ENCODE measurements at regions of chr4 and their contacts with region 1.

Region 1: GRCh38 chr4:142434519-142435239 is 411.4 kb downstream of the INPP4B start:
- DNase-seq: no peak
- H3K4me3 Mint-ChIP-seq: no peak overlapping the region
- H3K27ac Mint-ChIP-seq: peak overlapping the region; percentile 9
- H3K4me1 Mint-ChIP-seq: peaks cover 14% of the 10 kb centered on the region
- H3K27me3 Mint-ChIP-seq: no peaks in the 10 kb centered on the region

Region 2: DNA sequence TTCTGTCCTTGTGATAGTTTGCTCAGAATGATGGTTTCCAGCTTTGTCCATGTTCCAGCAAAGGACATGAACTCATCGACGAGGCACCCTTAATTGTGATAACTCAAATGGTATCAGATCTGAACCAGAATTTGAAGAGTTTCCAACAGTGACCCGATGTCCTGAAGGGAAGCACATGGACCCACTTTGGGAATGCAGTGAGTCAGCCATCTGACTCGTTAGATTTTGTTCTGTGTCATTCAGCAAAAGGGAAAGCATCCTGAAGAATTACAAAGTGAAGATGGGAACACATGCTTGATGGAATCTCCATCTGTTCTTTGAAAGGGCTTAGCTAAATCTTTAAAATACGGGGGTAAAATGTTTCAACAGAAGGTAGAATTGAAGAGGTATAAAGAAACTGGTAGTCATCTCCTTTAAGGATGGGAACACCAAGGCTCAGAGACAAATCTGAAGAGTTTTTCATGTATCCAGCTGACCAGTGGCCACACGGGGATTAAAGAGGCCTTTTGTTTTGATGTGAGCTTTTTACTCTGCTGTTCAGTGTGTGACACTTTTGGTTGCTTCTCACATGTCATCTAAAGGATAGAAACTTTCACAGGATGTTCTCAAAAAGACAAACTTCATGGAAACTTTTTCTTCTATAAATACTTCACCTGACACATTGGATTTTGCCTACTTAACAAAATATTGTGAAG is 17.6 kb after region 1 on chr4:
- intact Hi-C with region 1: no loop called
- DNase-seq: no peak
- H3K4me3 Mint-ChIP-seq: no peak overlapping the region
- H3K27ac Mint-ChIP-seq: no peak overlapping the region
- H3K4me1 Mint-ChIP-seq: peaks cover 13% of the 10 kb centered on the region
- H3K27me3 Mint-ChIP-seq: no peaks in the 10 kb centered on the region

Region 3: DNA sequence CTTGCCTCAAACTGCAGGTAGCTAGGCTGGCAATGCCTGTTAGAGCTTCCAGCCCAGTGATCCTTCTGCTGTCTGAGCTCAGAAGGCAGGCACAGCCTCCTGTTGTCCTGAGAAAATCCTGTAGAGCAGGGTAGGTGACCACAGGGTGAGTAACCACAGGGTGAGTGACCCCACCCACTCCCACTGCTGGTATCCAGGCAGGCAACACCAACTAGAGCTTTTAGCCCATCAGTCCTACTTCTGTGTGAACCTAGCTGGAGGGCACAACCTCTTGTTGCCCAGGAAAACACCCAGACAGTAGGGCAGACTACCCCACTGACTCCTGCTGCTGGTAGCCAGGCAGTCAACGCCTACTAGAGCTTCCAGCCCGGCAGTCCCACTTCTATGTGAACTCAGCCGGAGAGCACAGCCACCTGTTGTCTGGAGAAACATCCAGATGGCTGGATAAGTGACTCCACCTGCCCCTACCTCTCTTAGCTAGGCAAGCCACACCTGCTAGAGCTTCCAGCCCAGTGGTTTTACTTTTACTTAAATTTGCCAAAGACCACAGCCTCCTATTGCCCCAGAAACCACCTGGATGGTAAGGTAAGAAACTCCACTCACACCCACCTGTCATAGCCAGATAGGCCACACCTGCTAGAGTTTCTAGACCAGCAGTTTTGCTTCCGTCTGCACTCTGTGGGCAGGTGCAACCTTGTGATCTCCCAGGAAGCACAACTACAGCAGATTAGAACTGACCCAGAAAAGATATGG is 39.8 kb after region 1 on chr4:
- intact Hi-C with region 1: loop called (anchors 5 kb)
- DNase-seq: no peak
- H3K4me3 Mint-ChIP-seq: no peak overlapping the region
- H3K27ac Mint-ChIP-seq: no peak overlapping the region
- H3K4me1 Mint-ChIP-seq: peaks cover 23% of the 10 kb centered on the region
- H3K27me3 Mint-ChIP-seq: no peaks in the 10 kb centered on the region

Region 4: GRCh38 chr4:142762280-142762679 is 327.6 kb after region 1 on chr4:
- intact Hi-C with region 1: no loop called
- DNase-seq: no peak
- H3K4me3 Mint-ChIP-seq: no peak overlapping the region
- H3K27ac Mint-ChIP-seq: no peak overlapping the region
- H3K4me1 Mint-ChIP-seq: peaks cover 2% of the 10 kb centered on the region
- H3K27me3 Mint-ChIP-seq: no peaks in the 10 kb centered on the region